ENCODE measurements at regions of chr7 and their contacts with region 1.

Region 1: GRCh38 chr7:116211006-116211912 is 920 bp downstream of the TES start:
- DNase-seq: peak; percentile 58 to 89 (median 76)
- ATAC-seq: peak; percentile 84 to 89 (median 86)
- H3K4me3 ChIP-seq: peak overlapping the region; percentile 81 to 98
- H3K4me3 Mint-ChIP-seq: peak overlapping the region; percentile 97
- H3K27ac ChIP-seq: peak overlapping the region; percentile 91
- H3K27ac Mint-ChIP-seq: peak overlapping the region; percentile 97
- H3K4me1 ChIP-seq: peaks cover 17 to 42% of the 10 kb centered on the region in 2 experiments
- H3K4me1 Mint-ChIP-seq: peaks cover 52 to 63% (median 53%) of the 10 kb centered on the region in 3 donors
- H3K27me3 ChIP-seq: no peaks in the 10 kb centered on the region
- H3K27me3 Mint-ChIP-seq: no peaks in the 10 kb centered on the region

Region 2: GRCh38 chr7:116128139-116128538 is 83.1 kb before region 1 on chr7:
- CTCF ChIA-PET with region 1: interaction called in 1 of 2 experiments, 10 read pairs
- POLR2A ChIA-PET with region 1: no interaction called
- DNase-seq: no peak
- ATAC-seq: no peak
- H3K4me3 ChIP-seq: no peak overlapping the region
- H3K4me3 Mint-ChIP-seq: no peak overlapping the region
- H3K27ac ChIP-seq: no peak overlapping the region
- H3K27ac Mint-ChIP-seq: no peak overlapping the region
- H3K4me1 ChIP-seq: no peaks in the 10 kb centered on the region
- H3K4me1 Mint-ChIP-seq: no peaks in the 10 kb centered on the region
- H3K27me3 ChIP-seq: peaks cover 0 to 2% of the 10 kb centered on the region in 2 experiments
- H3K27me3 Mint-ChIP-seq: peaks cover 11 to 17% of the 10 kb centered on the region in 2 donors

Region 3: DNA sequence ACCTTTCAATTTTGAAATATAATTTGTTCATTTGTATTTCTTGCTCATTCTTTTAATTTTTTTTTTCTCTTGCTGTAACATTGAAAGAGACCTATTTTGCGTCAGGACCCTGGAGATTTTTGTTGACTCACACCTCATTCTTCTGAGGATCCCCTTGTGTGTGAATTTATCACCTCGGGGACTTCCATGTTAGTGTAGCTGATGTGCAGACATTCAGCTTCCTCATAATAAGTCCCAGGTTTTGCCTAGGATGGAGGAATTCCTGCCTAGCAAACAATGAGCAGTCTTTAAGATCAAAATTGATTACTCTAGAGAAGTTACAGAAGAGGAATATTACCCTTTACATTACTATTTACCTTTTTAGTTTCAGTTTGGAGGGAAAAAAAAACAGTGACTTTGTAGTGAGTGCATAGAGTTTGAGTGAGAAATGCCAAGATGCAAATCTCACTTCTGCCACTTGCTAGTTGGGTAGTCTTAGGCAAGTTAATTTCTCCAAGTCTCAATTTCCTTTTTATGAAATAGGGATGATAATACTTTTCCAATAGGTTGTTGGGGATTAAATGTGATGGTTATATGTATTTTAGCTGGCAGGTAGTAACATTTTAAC is 13.3 kb after region 1 on chr7:
- CTCF ChIA-PET with region 1: interaction called in 1 of 2 experiments, 107 read pairs
- POLR2A ChIA-PET with region 1: interaction called, 7 to 10 read pairs
- DNase-seq: peak in 3 of 35 experiments; percentile 3 to 58 (median 9)
- ATAC-seq: peak in 2 of 4 experiments; percentile 57 to 82
- H3K4me3 ChIP-seq: no peak overlapping the region
- H3K4me3 Mint-ChIP-seq: peak overlapping the region; percentile 57 to 64 (median 58)
- H3K27ac ChIP-seq: no peak overlapping the region
- H3K27ac Mint-ChIP-seq: peak overlapping the region; percentile 60 to 69
- H3K4me1 ChIP-seq: peaks cover 15 to 57% of the 10 kb centered on the region in 2 experiments
- H3K4me1 Mint-ChIP-seq: peaks cover 87 to 93% (median 91%) of the 10 kb centered on the region in 3 donors
- H3K27me3 ChIP-seq: no peaks in the 10 kb centered on the region
- H3K27me3 Mint-ChIP-seq: no peaks in the 10 kb centered on the region